HCT116 (cell line): ENCODE measurements at regions of chr15 and their contacts with region 1.

Region 1: DNA sequence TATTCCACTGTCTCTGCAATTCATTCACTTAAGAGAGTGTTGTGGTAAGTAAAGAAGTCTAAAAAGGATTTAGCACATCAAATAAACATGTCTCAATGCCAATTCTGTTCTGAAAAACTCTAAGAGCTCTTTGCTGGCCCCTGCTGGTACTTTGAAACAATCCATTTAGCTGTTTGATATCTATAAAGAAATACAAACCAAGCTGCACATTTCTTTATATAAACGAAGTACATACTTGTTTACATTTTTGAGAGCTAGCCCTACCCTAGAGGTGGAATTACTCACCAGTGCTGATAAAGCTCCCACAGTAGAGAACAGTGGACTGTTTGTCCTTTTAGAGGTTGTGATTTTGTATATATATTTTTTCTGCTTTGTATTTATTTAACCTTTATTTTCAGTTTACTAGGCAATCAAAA is 75.5 kb downstream of the NEDD4 start:
- DNase-seq: peak; percentile 35
- ATAC-seq: peak; percentile 73
- H3K4me3 ChIP-seq: no peak overlapping the region
- H3K27ac ChIP-seq: no peak overlapping the region
- H3K4me1 ChIP-seq: peaks cover 6% of the 10 kb centered on the region in 2 experiments; a peak in 3 of 4 replicates
- H3K27me3 ChIP-seq: no peaks in the 10 kb centered on the region
- CTCF ChIP-seq: peak; percentile 32 to 65 (median 63); a peak in 5 of 6 replicates
- POLR2A ChIP-seq: no peak
- RAD21 ChIP-seq: peak; percentile 35

Region 2: GRCh38 chr15:55715355-55716076 is 202.4 kb before region 1 on chr15:
- CTCF ChIA-PET with region 1: no interaction called
- POLR2A ChIA-PET with region 1: no interaction called
- RAD21 ChIA-PET with region 1: no interaction called
- intact Hi-C with region 1: no loop called
- DNase-seq: no peak
- ATAC-seq: no peak
- H3K4me3 ChIP-seq: no peak overlapping the region
- H3K27ac ChIP-seq: no peak overlapping the region
- H3K4me1 ChIP-seq: no peaks in the 10 kb centered on the region
- H3K27me3 ChIP-seq: no peaks in the 10 kb centered on the region
- CTCF ChIP-seq: no peak
- POLR2A ChIP-seq: no peak
- RAD21 ChIP-seq: no peak

Region 3: GRCh38 chr15:55907797-55908196 is 10.1 kb before region 1 on chr15:
- CTCF ChIA-PET with region 1: interaction called, 15 read pairs
- POLR2A ChIA-PET with region 1: interaction called, 6 read pairs
- RAD21 ChIA-PET with region 1: interaction called in 1 of 2 experiments, 3 read pairs
- intact Hi-C with region 1: no loop called
- DNase-seq: peak; percentile 86
- ATAC-seq: peak; percentile 96
- H3K4me3 ChIP-seq: peak overlapping the region in 1 of 2 experiments; percentile 27; a peak in 2 of 4 replicates
- H3K27ac ChIP-seq: peak overlapping the region; percentile 50; the same call in 1 of the 2 replicates
- H3K4me1 ChIP-seq: peaks cover 10 to 33% of the 10 kb centered on the region in 2 experiments
- H3K27me3 ChIP-seq: no peaks in the 10 kb centered on the region
- CTCF ChIP-seq: no peak
- POLR2A ChIP-seq: no peak
- RAD21 ChIP-seq: no peak